ENCODE measurements at regions of chr9 and their contacts with region 1.

Region 1: GRCh38 chr9:131334629-131335367 is 45.3 kb downstream of the PLPP7 start:
- DNase-seq: no peak
- ATAC-seq: no peak
- H3K4me3 Mint-ChIP-seq: no peak overlapping the region
- H3K27ac Mint-ChIP-seq: no peak overlapping the region
- H3K4me1 Mint-ChIP-seq: peaks cover 8% of the 10 kb centered on the region
- H3K27me3 Mint-ChIP-seq: no peaks in the 10 kb centered on the region

Region 2: DNA sequence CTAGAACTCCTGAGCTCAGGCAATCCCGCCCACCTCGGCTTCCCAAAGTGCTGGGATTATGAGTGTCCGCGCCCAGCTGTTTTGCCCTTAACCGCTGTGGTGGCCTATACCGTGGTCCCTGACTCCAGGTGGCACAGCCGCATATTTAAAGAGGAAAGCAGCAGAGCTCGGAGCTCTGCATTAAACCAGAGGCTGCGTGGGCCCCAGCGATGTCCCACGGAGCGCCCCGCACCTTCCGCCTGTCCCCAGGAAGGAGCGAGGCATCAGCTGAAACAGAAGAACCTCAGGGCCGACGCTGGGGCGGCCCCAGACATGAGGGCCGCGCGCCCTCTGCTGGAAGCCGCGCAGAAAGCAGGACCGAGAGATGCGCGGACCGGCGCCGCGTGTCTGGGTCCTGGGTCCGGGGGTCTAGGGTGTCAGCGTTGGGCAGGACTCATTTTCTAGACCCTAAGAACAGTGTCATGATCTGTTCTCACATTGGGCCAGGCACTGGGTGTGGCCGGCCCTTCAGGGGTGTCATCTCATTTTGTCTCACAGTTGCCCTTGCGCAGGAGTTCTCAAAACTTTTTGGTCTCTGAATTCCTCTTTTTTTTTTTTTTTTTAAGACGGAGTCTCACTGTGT is 288.1 kb before region 1 on chr9:
- CTCF ChIA-PET with region 1: interaction called, 11 read pairs
- DNase-seq: peak; percentile 76
- ATAC-seq: peak; percentile 93
- H3K4me3 Mint-ChIP-seq: no peak overlapping the region
- H3K27ac Mint-ChIP-seq: no peak overlapping the region
- H3K4me1 Mint-ChIP-seq: peaks cover 2% of the 10 kb centered on the region
- H3K27me3 Mint-ChIP-seq: peaks cover 4% of the 10 kb centered on the region

Region 3: GRCh38 chr9:131125128-131126058 is 209.4 kb before region 1 on chr9 and contains the start of gene NUP214:
- CTCF ChIA-PET with region 1: interaction called, 10 read pairs
- DNase-seq: peak; percentile 100
- ATAC-seq: peak; percentile 99
- H3K4me3 Mint-ChIP-seq: peak within 1 kb of the TSS; percentile 86
- H3K27ac Mint-ChIP-seq: peak within 1 kb of the TSS; percentile 93
- H3K4me1 Mint-ChIP-seq: peaks cover 36% of the 10 kb centered on the region
- H3K27me3 Mint-ChIP-seq: no peaks in the 10 kb centered on the region
- total RNA-seq, gene NUP214: 58.3 to 79.9 TPM

Region 4: DNA sequence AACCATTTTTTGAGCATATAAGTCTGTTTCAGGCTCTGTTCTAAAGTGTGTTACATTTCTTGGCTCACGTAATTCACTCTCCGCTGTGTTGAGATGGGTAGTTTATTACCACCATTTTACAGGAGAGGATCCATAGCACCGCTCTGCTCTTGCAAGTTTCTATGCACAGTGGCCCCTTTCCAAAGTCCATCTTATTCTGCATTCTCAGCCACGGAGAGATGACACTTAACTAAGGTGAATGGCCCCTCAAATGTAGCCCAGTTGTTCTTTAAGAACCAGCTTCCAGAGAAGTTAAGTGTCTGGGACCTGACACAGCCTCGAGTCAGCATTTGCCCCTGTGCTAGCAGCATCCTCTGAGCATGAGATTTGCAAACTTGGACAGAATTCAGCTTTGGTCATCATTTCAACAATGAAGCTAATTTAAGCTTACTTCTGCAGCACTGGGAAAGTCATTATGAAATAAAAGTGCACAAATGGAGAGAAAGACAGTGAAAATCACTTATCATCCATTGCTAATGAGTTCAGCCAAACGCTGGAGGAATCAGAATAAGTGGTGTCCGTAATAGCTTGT is 120.4 kb before region 1 on chr9:
- CTCF ChIA-PET with region 1: interaction called, 15 read pairs
- DNase-seq: no peak
- ATAC-seq: no peak
- H3K4me3 Mint-ChIP-seq: no peak overlapping the region
- H3K27ac Mint-ChIP-seq: no peak overlapping the region
- H3K4me1 Mint-ChIP-seq: no peaks in the 10 kb centered on the region
- H3K27me3 Mint-ChIP-seq: no peaks in the 10 kb centered on the region

Region 5: GRCh38 chr9:131253891-131254491 is 80.8 kb before region 1 on chr9:
- CTCF ChIA-PET with region 1: interaction called, 11 read pairs
- DNase-seq: no peak
- ATAC-seq: no peak
- H3K4me3 Mint-ChIP-seq: no peak overlapping the region
- H3K27ac Mint-ChIP-seq: peak overlapping the region; percentile 97
- H3K4me1 Mint-ChIP-seq: peaks cover 65% of the 10 kb centered on the region
- H3K27me3 Mint-ChIP-seq: no peaks in the 10 kb centered on the region

Region 6: GRCh38 chr9:131277910-131278701 is 56.7 kb before region 1 on chr9:
- CTCF ChIA-PET with region 1: interaction called, 10 read pairs
- DNase-seq: peak; percentile 88
- ATAC-seq: peak; percentile 56
- H3K4me3 Mint-ChIP-seq: peak overlapping the region; percentile 78
- H3K27ac Mint-ChIP-seq: peak overlapping the region; percentile 97
- H3K4me1 Mint-ChIP-seq: peaks cover 23% of the 10 kb centered on the region
- H3K27me3 Mint-ChIP-seq: peaks cover 14% of the 10 kb centered on the region

Region 7: DNA sequence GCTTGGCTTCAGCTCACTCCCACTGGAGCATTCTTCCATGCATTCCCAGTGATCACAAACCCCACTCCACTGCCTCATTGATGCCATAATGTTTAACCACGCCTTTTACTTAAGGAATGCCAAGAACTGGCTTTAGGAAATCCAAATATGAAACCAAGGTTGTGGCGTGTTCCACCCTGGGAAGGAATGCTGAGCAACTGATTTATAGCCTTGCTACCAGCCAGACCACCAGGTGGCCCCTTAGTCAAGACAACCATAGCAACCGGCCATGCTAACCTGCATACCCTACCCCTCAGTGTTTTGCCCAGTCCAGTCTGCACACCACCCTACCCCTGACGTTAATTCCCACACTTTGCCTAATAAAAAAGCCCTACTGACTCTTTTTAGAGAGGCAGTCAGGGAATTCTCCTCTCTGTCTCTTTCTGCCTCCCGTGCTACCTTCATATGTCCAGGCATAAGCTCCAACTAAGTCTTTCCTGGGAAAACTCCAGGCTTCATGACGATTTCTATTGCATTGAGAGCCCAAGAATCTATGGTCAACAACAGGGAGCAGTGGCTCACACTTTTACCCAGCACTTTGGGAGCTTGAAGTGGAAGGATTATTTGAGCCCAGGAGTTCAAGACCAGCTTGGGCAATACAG is 32.1 kb after region 1 on chr9:
- CTCF ChIA-PET with region 1: interaction called, 13 read pairs
- DNase-seq: no peak
- ATAC-seq: no peak
- H3K4me3 Mint-ChIP-seq: no peak overlapping the region
- H3K27ac Mint-ChIP-seq: no peak overlapping the region
- H3K4me1 Mint-ChIP-seq: peaks cover 3% of the 10 kb centered on the region
- H3K27me3 Mint-ChIP-seq: no peaks in the 10 kb centered on the region

Region 8: GRCh38 chr9:131382850-131383729 is 48.3 kb after region 1 on chr9:
- CTCF ChIA-PET with region 1: no interaction called
- DNase-seq: no peak
- ATAC-seq: peak; percentile 78
- H3K4me3 Mint-ChIP-seq: no peak overlapping the region
- H3K27ac Mint-ChIP-seq: peak overlapping the region; percentile 63
- H3K4me1 Mint-ChIP-seq: peaks cover 11% of the 10 kb centered on the region
- H3K27me3 Mint-ChIP-seq: peaks cover 2% of the 10 kb centered on the region

Measured in activated CD8-positive, alpha-beta memory T cell treated with anti-CD3 and anti-CD28 coated beads, Interleukin-2, amount 10 ng/mL, durations not matched to agents 7 days and 5 days (primary cell).